ENCODE measurements at regions of chr11 and their contacts with region 1.

Region 1: DNA sequence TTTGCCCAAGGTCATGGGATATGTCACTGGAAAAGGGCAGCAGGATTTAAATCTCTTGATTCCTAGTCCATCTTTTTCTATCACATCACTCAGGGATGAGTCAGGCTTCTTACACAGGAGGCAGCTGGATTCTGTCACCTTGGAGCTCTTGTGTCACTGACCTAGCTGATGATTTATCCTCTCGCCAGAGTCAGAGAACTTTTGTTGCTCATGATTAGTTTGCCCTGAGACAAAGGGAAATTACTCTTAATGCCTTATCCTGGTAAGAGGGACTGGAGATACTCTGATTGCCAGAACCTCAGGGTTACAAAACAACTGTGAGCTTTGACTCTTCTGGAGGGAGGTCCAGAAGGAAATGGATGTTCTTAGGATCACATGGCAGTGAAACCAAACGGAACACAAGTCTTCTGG is 10.1 kb downstream of the COA4 start:
- DNase-seq: peak; percentile 34 to 65
- ATAC-seq: peak; percentile 65 to 82
- H3K4me3 ChIP-seq: no peak overlapping the region
- H3K27ac ChIP-seq: peak overlapping the region; percentile 50 to 76; a peak in 5 of 6 replicates
- H3K4me1 ChIP-seq: peaks cover 51% of the 10 kb centered on the region
- CTCF ChIP-seq: no peak
- EP300 ChIP-seq: no peak
- POLR2A ChIP-seq: no peak
- RAD21 ChIP-seq: no peak

Region 2: GRCh38 chr11:73787643-73788537 is 78.7 kb before region 1 on chr11 and contains the start of gene MRPL48:
- CTCF ChIA-PET with region 1: no interaction called
- POLR2A ChIA-PET with region 1: interaction called, 13 read pairs
- DNase-seq: peak; percentile 98
- ATAC-seq: peak; percentile 99
- H3K4me3 ChIP-seq: peak within 1 kb of the TSS; percentile 78
- H3K27ac ChIP-seq: peak within 1 kb of the TSS; percentile 91 to 96
- H3K4me1 ChIP-seq: peaks cover 30% of the 10 kb centered on the region; the same call in 2 of the 3 replicates
- CTCF ChIP-seq: no peak
- EP300 ChIP-seq: no peak
- POLR2A ChIP-seq: peak; percentile 73
- RAD21 ChIP-seq: peak in 1 of 2 experiments; percentile 14; a peak in 1 of 5 replicates
- polyA plus RNA-seq, gene MRPL48: 103 and 104 TPM in 2 replicates

Region 3: GRCh38 chr11:74248469-74248868 is 381.9 kb after region 1 on chr11:
- CTCF ChIA-PET with region 1: no interaction called
- POLR2A ChIA-PET with region 1: no interaction called
- DNase-seq: no peak
- ATAC-seq: no peak
- H3K4me3 ChIP-seq: no peak overlapping the region
- H3K27ac ChIP-seq: no peak overlapping the region
- H3K4me1 ChIP-seq: no peaks in the 10 kb centered on the region
- CTCF ChIP-seq: no peak
- EP300 ChIP-seq: no peak
- POLR2A ChIP-seq: no peak
- RAD21 ChIP-seq: no peak

Measured in A549 (cell line).